ENCODE measurements at regions of chr4 and their contacts with region 1.

Region 1: GRCh38 chr4:88591787-88592599 is at the start of gene HERC3:
- DNase-seq: peak; percentile 87 to 92 (median 91)
- ATAC-seq: peak; percentile 94
- H3K4me3 ChIP-seq: peak within 1 kb of the TSS; percentile 60
- H3K4me3 Mint-ChIP-seq: peak within 1 kb of the TSS; percentile 94 to 100 (median 98)
- H3K27ac ChIP-seq: peak within 1 kb of the TSS; percentile 93
- H3K27ac Mint-ChIP-seq: peak within 1 kb of the TSS; percentile 83 to 99 (median 97)
- H3K4me1 ChIP-seq: peaks cover 10 to 20% of the 10 kb centered on the region in 2 donors
- H3K4me1 Mint-ChIP-seq: peaks cover 34 to 58% (median 49%) of the 10 kb centered on the region in 7 donors
- H3K27me3 ChIP-seq: no peaks in the 10 kb centered on the region
- H3K27me3 Mint-ChIP-seq: peaks cover 0 to 31% (median 0%) of the 10 kb centered on the region in 5 donors
- total RNA-seq, gene HERC3: 38.1 to 130 (median 104) TPM

Region 2: GRCh38 chr4:86934771-86935565 is 1657.0 kb before region 1 on chr4 and contains the start of gene AFF1:
- CTCF ChIA-PET with region 1: no interaction called
- POLR2A ChIA-PET with region 1: no interaction called
- intact Hi-C with region 1: loop called in 1 of 2 experiments (anchors 5 kb)
- DNase-seq: peak; percentile 74 to 91 (median 81)
- ATAC-seq: peak; percentile 90
- H3K4me3 ChIP-seq: peak within 1 kb of the TSS; percentile 91
- H3K4me3 Mint-ChIP-seq: peak within 1 kb of the TSS; percentile 92 to 97 (median 94)
- H3K27ac ChIP-seq: peak within 1 kb of the TSS; percentile 90
- H3K27ac Mint-ChIP-seq: peak within 1 kb of the TSS; percentile 91 to 97 (median 96)
- H3K4me1 ChIP-seq: peaks cover 29% of the 10 kb centered on the region in 2 donors
- H3K4me1 Mint-ChIP-seq: peaks cover 37 to 61% (median 53%) of the 10 kb centered on the region in 7 donors
- H3K27me3 ChIP-seq: no peaks in the 10 kb centered on the region
- H3K27me3 Mint-ChIP-seq: no peaks in the 10 kb centered on the region
- total RNA-seq, gene AFF1: 65.8 to 88.6 (median 78.7) TPM

Region 3: GRCh38 chr4:87616268-87616667 is 975.7 kb before region 1 on chr4:
- CTCF ChIA-PET with region 1: no interaction called
- POLR2A ChIA-PET with region 1: no interaction called
- intact Hi-C with region 1: no loop called
- DNase-seq: no peak
- ATAC-seq: no peak
- H3K4me3 ChIP-seq: no peak overlapping the region
- H3K4me3 Mint-ChIP-seq: no peak overlapping the region
- H3K27ac ChIP-seq: no peak overlapping the region
- H3K27ac Mint-ChIP-seq: no peak overlapping the region
- H3K4me1 ChIP-seq: no peaks in the 10 kb centered on the region
- H3K4me1 Mint-ChIP-seq: no peaks in the 10 kb centered on the region
- H3K27me3 ChIP-seq: no peaks in the 10 kb centered on the region
- H3K27me3 Mint-ChIP-seq: peaks cover 0 to 23% (median 4%) of the 10 kb centered on the region in 5 donors

Region 4: GRCh38 chr4:88007304-88008121 is 584.5 kb before region 1 on chr4 and contains the start of gene PKD2:
- CTCF ChIA-PET with region 1: no interaction called
- POLR2A ChIA-PET with region 1: no interaction called
- intact Hi-C with region 1: loop called in 1 of 2 experiments (anchors 5 kb)
- DNase-seq: peak; percentile 10 to 89 (median 54)
- ATAC-seq: peak; percentile 92
- H3K4me3 ChIP-seq: peak within 1 kb of the TSS; percentile 61
- H3K4me3 Mint-ChIP-seq: peak within 1 kb of the TSS; percentile 81 to 98 (median 94)
- H3K27ac ChIP-seq: peak within 1 kb of the TSS; percentile 56
- H3K27ac Mint-ChIP-seq: peak within 1 kb of the TSS; percentile 2 to 90 (median 58)
- H3K4me1 ChIP-seq: peaks cover 6 to 7% of the 10 kb centered on the region in 2 donors
- H3K4me1 Mint-ChIP-seq: peaks cover 19 to 42% (median 37%) of the 10 kb centered on the region in 7 donors
- H3K27me3 ChIP-seq: no peaks in the 10 kb centered on the region
- H3K27me3 Mint-ChIP-seq: peaks cover 0 to 31% (median 3%) of the 10 kb centered on the region in 5 donors
- total RNA-seq, gene PKD2: 4.9 to 16.1 (median 6.8) TPM

Region 5: DNA sequence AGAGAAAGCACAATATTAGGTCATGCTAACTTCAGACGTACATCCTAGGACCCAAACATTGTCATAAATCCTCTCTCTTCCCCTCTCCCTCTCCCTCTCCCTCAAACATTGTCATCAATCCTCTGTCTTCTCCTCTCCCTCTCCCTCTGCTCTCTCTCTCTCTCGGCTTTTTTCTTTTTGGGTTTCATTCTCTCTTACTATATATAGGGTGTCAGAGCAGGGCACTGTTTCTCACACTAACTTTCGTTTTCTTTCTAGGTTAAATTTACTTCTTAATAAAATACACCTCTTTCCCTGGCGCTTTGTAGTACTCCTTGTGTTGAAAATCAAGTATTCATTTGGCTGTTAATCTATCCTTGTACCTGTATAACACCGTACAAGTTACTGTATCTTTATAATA is 172.1 kb before region 1 on chr4:
- CTCF ChIA-PET with region 1: no interaction called
- POLR2A ChIA-PET with region 1: no interaction called
- intact Hi-C with region 1: no loop called
- DNase-seq: no peak
- ATAC-seq: no peak
- H3K4me3 ChIP-seq: no peak overlapping the region
- H3K4me3 Mint-ChIP-seq: peak overlapping the region in 1 of 10 donors; percentile 13
- H3K27ac ChIP-seq: no peak overlapping the region
- H3K27ac Mint-ChIP-seq: peak overlapping the region in 2 of 9 donors; percentile 3 to 4
- H3K4me1 ChIP-seq: no peaks in the 10 kb centered on the region
- H3K4me1 Mint-ChIP-seq: peaks cover 0 to 5% (median 0%) of the 10 kb centered on the region in 7 donors
- H3K27me3 ChIP-seq: no peaks in the 10 kb centered on the region
- H3K27me3 Mint-ChIP-seq: no peaks in the 10 kb centered on the region

Region 6: DNA sequence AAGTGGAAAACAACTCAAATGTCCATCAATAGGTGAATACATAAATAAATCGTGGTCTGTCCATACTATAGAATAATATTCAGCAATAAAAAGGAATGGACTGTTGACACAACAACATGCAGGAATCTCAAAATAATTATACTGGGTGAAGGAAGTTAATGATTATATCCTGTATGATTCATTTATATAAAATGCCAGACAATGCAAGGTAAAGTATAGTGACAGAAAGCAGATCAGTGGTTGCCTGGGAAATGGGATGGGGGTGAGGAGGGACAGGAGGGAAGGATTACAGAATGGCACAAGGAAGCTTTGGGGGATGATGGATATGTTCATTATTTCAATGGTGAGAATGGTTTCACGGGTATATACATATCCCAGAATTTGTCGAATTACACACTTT is 80.8 kb before region 1 on chr4:
- CTCF ChIA-PET with region 1: no interaction called
- POLR2A ChIA-PET with region 1: no interaction called
- intact Hi-C with region 1: no loop called
- DNase-seq: no peak
- ATAC-seq: no peak
- H3K4me3 ChIP-seq: no peak overlapping the region
- H3K4me3 Mint-ChIP-seq: no peak overlapping the region
- H3K27ac ChIP-seq: no peak overlapping the region
- H3K27ac Mint-ChIP-seq: no peak overlapping the region
- H3K4me1 ChIP-seq: no peaks in the 10 kb centered on the region
- H3K4me1 Mint-ChIP-seq: no peaks in the 10 kb centered on the region
- H3K27me3 ChIP-seq: no peaks in the 10 kb centered on the region
- H3K27me3 Mint-ChIP-seq: peaks cover 0 to 8% (median 0%) of the 10 kb centered on the region in 5 donors

Region 7: GRCh38 chr4:88523325-88524129 is 68.5 kb before region 1 on chr4 and contains the start of gene PYURF:
- CTCF ChIA-PET with region 1: no interaction called
- POLR2A ChIA-PET with region 1: interaction called, 3 read pairs
- intact Hi-C with region 1: loop called (anchors 1 kb)
- DNase-seq: peak; percentile 46 to 85 (median 50)
- ATAC-seq: peak; percentile 85
- H3K4me3 ChIP-seq: peak within 1 kb of the TSS; percentile 75
- H3K4me3 Mint-ChIP-seq: peak within 1 kb of the TSS; percentile 88 to 98 (median 92)
- H3K27ac ChIP-seq: peak within 1 kb of the TSS; percentile 79
- H3K27ac Mint-ChIP-seq: peak within 1 kb of the TSS; percentile 88 to 97 (median 93)
- H3K4me1 ChIP-seq: peaks cover 10 to 19% of the 10 kb centered on the region in 2 donors
- H3K4me1 Mint-ChIP-seq: peaks cover 0 to 56% (median 48%) of the 10 kb centered on the region in 7 donors
- H3K27me3 ChIP-seq: no peaks in the 10 kb centered on the region
- H3K27me3 Mint-ChIP-seq: no peaks in the 10 kb centered on the region
- total RNA-seq, gene PYURF: 33.0 to 57.7 (median 47.4) TPM

Region 8: GRCh38 chr4:88613417-88613875 is 21.5 kb after region 1 on chr4:
- CTCF ChIA-PET with region 1: interaction called, 12 read pairs
- POLR2A ChIA-PET with region 1: interaction called, 167 read pairs
- intact Hi-C with region 1: loop called (anchors 1 kb)
- DNase-seq: peak in 7 of 9 donors; percentile 71 to 91 (median 85)
- ATAC-seq: peak; percentile 94
- H3K4me3 ChIP-seq: peak overlapping the region; percentile 43
- H3K4me3 Mint-ChIP-seq: peak overlapping the region; percentile 64 to 92 (median 84)
- H3K27ac ChIP-seq: peak overlapping the region; percentile 77
- H3K27ac Mint-ChIP-seq: peak overlapping the region; percentile 91 to 99 (median 99)
- H3K4me1 ChIP-seq: peaks cover 28 to 55% of the 10 kb centered on the region in 2 donors
- H3K4me1 Mint-ChIP-seq: peaks cover 50 to 98% (median 86%) of the 10 kb centered on the region in 7 donors
- H3K27me3 ChIP-seq: no peaks in the 10 kb centered on the region
- H3K27me3 Mint-ChIP-seq: no peaks in the 10 kb centered on the region

Region 9: GRCh38 chr4:89294573-89295269 is 702.7 kb after region 1 on chr4:
- CTCF ChIA-PET with region 1: no interaction called
- POLR2A ChIA-PET with region 1: no interaction called
- intact Hi-C with region 1: loop called in 1 of 2 experiments (anchors 5 kb)
- DNase-seq: peak in 7 of 9 donors; percentile 62 to 88 (median 81)
- ATAC-seq: peak; percentile 86
- H3K4me3 ChIP-seq: peak overlapping the region; percentile 21
- H3K4me3 Mint-ChIP-seq: peak overlapping the region; percentile 38 to 83 (median 73)
- H3K27ac ChIP-seq: peak overlapping the region; percentile 69
- H3K27ac Mint-ChIP-seq: peak overlapping the region; percentile 81 to 97 (median 94)
- H3K4me1 ChIP-seq: peaks cover 73 to 82% of the 10 kb centered on the region in 2 donors
- H3K4me1 Mint-ChIP-seq: peaks cover 57 to 99% (median 86%) of the 10 kb centered on the region in 7 donors
- H3K27me3 ChIP-seq: no peaks in the 10 kb centered on the region
- H3K27me3 Mint-ChIP-seq: no peaks in the 10 kb centered on the region

Measured in naive thymus-derived CD4-positive, alpha-beta T cell (primary cell).